ENCODE measurements at regions of chr12 and their contacts with region 1.

Region 1: GRCh38 chr12:77010691-77011548 is 54.4 kb downstream of the E2F7 start:
- DNase-seq: peak; percentile 73
- CTCF ChIP-seq: peak; percentile 94

Region 2: DNA sequence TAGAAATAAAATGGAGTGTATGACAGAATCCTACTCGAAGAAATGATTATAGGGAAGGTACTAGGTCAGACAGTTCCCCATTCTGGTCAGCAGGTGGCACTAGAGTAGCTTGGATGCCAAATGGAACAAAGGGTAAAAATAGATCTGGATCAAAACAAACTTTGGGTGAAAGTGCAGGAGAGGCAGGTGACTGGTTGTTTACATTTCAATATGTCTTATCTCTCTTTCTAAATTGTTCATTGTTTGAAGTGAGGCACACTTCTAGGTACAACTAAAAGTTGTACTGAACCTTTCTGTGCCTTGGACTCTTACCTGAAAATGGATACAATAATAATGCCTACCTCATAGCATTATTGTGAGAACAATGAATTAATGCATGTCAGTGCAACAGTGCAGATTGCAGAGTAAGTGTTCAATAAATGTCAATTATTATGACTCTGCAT is 389.3 kb before region 1 on chr12:
- in situ Hi-C with region 1: loop called (anchors 25 kb)
- DNase-seq: peak; percentile 57
- CTCF ChIP-seq: peak; percentile 86

Region 3: DNA sequence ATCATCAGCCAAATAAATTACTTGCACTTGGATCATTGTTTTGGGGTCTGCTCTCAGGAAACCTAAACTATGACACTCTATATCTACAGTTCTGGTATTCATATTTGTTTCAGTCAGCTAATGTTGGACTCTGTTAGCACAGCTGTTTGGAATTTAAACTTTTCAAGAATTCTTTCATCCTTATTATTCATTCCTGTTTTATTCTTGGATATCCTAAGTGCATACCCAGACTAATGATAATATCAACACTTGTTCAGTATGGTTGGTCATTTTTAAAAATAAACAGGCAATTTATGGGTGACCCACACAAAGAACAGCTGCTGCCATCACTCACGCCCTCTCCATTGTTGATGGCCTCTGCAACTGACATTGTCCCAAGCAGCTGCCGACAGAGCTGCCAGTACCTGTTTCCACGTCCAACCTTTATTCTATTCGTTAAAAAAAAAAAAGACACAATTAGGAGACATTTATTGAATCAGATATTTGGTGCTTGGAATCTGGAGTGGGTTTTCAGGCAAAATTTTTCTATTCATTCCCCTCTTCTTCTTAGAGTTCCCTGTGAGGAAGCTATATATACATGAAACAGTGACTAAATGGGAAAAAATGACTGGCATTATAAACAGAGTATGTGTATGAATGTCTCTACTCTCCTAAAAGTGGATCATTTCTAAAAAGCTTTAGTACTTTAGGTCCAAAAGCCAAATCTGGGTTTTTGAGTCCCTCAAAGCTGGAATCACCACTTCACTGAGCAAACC is 567.7 kb after region 1 on chr12:
- in situ Hi-C with region 1: no loop called
- DNase-seq: no peak
- CTCF ChIP-seq: no peak